ENCODE measurements at regions of chr1 and their contacts with region 1.

Region 1: DNA sequence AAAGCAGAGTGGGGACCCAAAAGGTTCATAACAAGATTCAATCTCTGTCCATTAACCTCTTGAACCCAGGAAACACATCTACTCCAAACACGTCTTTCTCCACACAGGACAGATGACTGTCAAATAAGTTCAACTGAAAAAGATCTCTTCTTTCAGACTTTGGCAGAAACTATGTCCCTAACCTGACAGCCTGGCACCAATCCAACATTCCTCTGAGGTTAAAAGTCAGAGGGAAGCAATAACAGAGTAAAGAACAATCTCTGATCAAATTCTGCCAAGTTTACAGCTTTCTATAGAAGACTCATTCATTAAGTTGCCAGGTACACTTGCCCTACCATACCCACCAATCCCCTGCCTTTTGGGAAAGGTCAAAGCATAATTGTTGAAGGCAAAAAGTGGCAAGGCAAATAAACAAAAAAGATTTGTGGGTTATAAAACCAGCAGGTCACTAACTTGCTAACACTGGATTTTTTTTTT is 31.9 kb downstream of the OTUD7B start:
- DNase-seq: no peak
- H3K4me3 ChIP-seq: no peak overlapping the region
- H3K27ac ChIP-seq: no peak overlapping the region
- H3K4me1 ChIP-seq: no peaks in the 10 kb centered on the region
- CTCF ChIP-seq: no peak

Region 2: DNA sequence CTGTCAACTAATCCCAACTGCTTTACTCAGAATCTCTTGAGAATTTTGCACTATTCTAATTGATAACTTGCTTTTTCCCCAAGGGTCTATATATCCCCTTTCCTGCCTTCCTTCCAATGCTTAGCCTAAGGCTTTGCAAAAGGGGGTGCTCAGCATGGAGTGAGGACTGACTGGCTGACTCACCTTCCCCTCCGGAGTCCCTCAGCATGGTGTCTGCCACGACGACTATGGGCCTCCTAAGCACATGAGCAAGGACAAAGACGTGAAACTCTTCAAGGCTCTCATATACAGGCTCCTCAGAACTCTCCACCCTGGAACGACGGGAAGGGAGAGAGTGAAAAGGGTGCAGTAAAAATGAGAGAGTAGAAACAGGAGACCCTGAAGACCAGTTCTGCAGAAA is 28.7 kb before region 1 on chr1:
- CTCF ChIA-PET with region 1: no interaction called
- POLR2A ChIA-PET with region 1: no interaction called
- intact Hi-C with region 1: no loop called
- DNase-seq: no peak
- H3K4me3 ChIP-seq: no peak overlapping the region
- H3K27ac ChIP-seq: no peak overlapping the region
- H3K4me1 ChIP-seq: no peaks in the 10 kb centered on the region
- CTCF ChIP-seq: no peak

Region 3: DNA sequence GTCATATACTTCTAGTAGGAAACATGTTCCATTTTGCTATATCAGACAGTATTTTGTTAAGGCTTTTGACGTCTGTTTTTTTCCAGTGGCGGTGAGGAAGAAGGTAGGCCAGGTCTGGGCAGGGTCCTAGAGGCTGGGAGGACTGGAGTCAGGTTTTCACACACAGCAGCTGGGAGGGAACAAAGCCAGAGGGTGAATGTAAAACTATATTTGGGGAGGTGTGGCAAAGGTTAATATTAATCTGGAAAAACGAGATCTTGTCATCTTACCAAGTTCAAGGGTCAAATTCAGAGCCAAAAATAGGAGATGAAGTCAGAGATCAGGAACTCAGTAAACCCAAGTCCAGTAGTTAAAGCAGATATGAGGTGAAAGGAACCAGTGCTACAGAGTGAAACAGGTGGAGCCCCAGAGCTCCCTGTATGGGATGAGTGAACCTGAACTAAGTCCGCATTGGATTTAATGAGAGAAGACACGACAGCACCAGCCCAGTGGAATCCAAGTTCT is 42.7 kb after region 1 on chr1:
- CTCF ChIA-PET with region 1: no interaction called
- POLR2A ChIA-PET with region 1: no interaction called
- intact Hi-C with region 1: loop called (anchors 5 kb)
- DNase-seq: no peak
- H3K4me3 ChIP-seq: no peak overlapping the region
- H3K27ac ChIP-seq: no peak overlapping the region
- H3K4me1 ChIP-seq: peaks cover 10% of the 10 kb centered on the region
- CTCF ChIP-seq: no peak

Measured in OCI-LY7 (cell line).